AG04449 (cell line): ENCODE measurements at regions of chr2 and their contacts with region 1.

Region 1: GRCh38 chr2:197011799-197012641 is 85.5 kb upstream of the PGAP1 start:
- DNase-seq: no peak
- H3K4me3 ChIP-seq: no peak overlapping the region
- CTCF ChIP-seq: peak; percentile 80

Region 2: DNA sequence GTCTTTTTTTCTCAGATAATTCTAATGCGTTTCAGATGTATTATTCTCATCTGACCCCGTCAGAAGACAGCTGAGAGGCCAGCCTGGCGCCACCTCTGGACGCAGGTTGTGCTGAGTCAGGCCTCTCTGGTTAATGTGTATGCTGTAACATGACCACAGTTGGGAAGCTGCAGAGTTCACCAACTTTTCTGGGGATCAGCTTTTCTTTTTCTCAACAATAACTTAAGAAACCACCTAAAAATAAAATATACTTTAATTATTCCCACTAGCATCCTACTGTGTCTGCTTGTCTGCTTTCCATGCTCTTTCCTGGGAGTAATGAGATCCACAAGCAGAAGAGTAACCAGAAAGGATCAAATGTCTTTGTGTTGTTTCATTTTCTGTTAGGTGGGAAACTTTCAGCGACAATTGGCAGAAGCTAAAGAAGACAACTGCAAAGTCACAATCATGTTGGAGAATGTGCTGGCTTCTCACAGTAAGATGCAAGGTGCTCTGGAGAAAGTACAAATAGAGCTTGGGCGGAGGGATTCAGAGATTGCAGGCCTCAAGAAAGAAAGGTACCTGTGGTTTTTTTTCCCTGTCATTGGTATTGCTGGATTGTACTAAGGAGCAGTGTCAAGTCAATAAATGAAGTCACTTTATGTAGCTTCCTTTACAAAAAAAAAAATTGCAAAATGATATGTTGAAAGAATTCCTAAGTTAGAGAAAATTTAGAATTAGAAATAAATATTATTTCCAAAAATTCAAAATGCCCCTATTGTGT is 292.7 kb before region 1 on chr2:
- CTCF ChIA-PET with region 1: no interaction called
- POLR2A ChIA-PET with region 1: no interaction called
- DNase-seq: no peak
- H3K4me3 ChIP-seq: no peak overlapping the region
- CTCF ChIP-seq: peak; percentile 33

Region 3: GRCh38 chr2:197001921-197002320 is 10.1 kb before region 1 on chr2:
- CTCF ChIA-PET with region 1: interaction called, 20 read pairs
- POLR2A ChIA-PET with region 1: no interaction called
- DNase-seq: no peak
- H3K4me3 ChIP-seq: no peak overlapping the region
- CTCF ChIP-seq: no peak

Region 4: GRCh38 chr2:197028230-197028629 is 16.2 kb after region 1 on chr2:
- CTCF ChIA-PET with region 1: interaction called, 19 read pairs
- POLR2A ChIA-PET with region 1: no interaction called
- DNase-seq: peak; percentile 28
- H3K4me3 ChIP-seq: no peak overlapping the region
- CTCF ChIP-seq: no peak

Region 5: GRCh38 chr2:197378494-197379307 is 366.7 kb after region 1 on chr2:
- CTCF ChIA-PET with region 1: interaction called, 12 read pairs
- POLR2A ChIA-PET with region 1: no interaction called
- DNase-seq: no peak
- H3K4me3 ChIP-seq: peak overlapping the region; percentile 33; the same call in 1 of the 2 replicates
- CTCF ChIP-seq: peak; percentile 65